ENCODE measurements at regions of chr22 and their contacts with region 1.

Region 1: DNA sequence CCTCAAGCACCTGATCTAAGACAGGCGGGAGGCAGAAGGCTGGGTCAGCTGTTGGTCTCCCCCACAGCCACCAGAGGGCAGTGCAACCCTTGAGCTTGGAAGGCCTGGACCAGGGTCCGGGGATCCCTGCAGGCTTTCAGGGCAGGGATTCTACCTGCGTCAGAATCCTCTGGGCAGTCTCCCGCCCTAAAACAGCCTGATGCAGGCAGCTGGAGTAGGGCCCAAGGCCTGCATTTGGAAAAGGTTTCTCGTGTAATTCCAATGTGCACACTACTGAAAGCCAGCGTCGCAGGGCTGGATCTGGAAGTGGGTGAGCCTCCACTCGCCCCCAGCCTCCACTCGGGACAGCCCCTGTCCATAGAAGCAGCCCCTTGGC is 31.8 kb downstream of the BID start:
- DNase-seq: peak; percentile 84
- H3K4me3 Mint-ChIP-seq: no peak overlapping the region
- H3K27ac Mint-ChIP-seq: no peak overlapping the region
- H3K4me1 Mint-ChIP-seq: peaks cover 6% of the 10 kb centered on the region
- H3K27me3 Mint-ChIP-seq: no peaks in the 10 kb centered on the region
- CTCF ChIP-seq: peak; percentile 90

Region 2: DNA sequence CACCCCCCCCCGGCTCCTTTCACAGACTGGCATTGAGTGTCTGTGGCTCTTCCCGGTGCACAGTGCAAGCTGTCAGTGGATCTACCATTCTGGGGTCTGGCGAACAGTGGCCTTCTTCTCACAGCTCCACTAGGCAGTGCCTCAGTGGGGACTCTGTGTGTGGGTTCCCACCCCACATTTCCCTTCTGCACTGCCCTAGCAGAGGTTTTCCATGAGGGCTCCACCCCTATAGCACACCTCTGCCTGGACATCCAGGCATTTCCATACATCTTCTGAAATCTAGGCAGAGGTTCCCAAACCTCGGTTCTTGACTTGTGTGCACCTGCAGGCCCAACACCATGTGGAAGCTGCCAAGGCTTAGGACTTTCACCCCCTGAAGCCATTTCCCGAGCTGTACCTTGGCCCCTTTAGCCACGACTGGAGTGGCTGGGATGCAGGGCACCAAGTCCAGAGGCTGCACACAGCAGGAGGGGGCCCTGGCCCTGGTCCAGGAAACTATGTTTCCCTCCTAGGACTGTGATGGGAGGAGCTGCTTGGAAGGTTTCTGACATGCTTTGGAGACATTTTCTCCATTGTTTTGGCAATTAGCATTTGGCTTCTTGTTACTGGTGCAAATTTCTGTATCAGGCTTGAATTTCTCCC is 78.0 kb before region 1 on chr22:
- CTCF ChIA-PET with region 1: no interaction called
- intact Hi-C with region 1: no loop called
- DNase-seq: no peak
- H3K4me3 Mint-ChIP-seq: no peak overlapping the region
- H3K27ac Mint-ChIP-seq: no peak overlapping the region
- H3K4me1 Mint-ChIP-seq: no peaks in the 10 kb centered on the region
- H3K27me3 Mint-ChIP-seq: no peaks in the 10 kb centered on the region
- CTCF ChIP-seq: no peak

Region 3: GRCh38 chr22:17773606-17774205 is 31.2 kb after region 1 on chr22:
- CTCF ChIA-PET with region 1: interaction called, 14 read pairs
- intact Hi-C with region 1: no loop called
- DNase-seq: peak; percentile 51
- H3K4me3 Mint-ChIP-seq: peak overlapping the region; percentile 91
- H3K27ac Mint-ChIP-seq: peak overlapping the region; percentile 68
- H3K4me1 Mint-ChIP-seq: peaks cover 31% of the 10 kb centered on the region
- H3K27me3 Mint-ChIP-seq: no peaks in the 10 kb centered on the region
- CTCF ChIP-seq: no peak